Heart right ventricle (tissue), 16 donors: ENCODE measurements at regions of chr19 and their contacts with region 1.

Region 1: DNA sequence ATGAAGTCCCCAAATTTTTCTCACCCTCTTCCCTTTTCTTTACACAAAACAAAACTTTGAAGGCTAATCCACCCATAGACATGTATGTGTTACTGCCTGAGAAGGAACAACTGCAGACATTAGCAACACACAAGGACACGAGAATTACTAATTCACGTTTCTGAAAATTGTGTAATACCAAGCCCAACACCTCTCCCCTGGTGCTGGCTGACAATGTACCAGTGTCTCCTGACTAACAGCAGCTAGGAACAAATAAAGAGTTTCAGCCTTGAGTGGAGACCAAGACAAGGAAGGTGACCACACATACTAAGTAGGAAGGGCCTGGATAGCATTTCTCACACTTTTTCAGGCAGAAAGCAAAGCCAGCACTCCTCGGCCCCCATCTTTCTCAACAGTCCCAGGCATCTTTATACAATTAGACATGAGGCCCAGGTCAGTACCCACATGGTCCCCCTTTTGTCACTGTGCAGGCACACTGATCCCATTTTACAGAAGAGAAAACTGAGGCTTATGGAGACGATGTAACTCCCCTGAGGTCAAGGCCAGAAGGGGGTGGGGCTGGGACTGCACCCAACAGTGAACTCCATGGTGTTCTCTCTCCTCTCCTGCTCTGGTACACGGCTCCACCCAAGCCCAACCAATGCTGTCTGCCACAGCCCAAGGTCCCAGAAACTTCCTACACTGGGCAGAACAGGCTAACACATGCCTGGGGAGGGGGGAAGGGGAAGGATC is 8.7 kb downstream of the BRD4 start:
- DNase-seq: peak; percentile 38 to 45
- ATAC-seq: peak; percentile 47 to 83 (median 68)
- H3K4me3 ChIP-seq: no peak overlapping the region
- H3K27ac ChIP-seq: peak overlapping the region in 7 of 10 donors; percentile 30 to 63 (median 52)
- H3K4me1 ChIP-seq: peaks cover 43 to 100% (median 95%) of the 10 kb centered on the region in 9 donors
- H3K27me3 ChIP-seq: no peaks in the 10 kb centered on the region
- CTCF ChIP-seq: no peak

Region 2: GRCh38 chr19:15274477-15274876 is 49.2 kb before region 1 on chr19:
- intact Hi-C with region 1: loop called in 4 of 10 experiments (anchors 5 to 10 kb)
- DNase-seq: no peak
- ATAC-seq: peak in 7 of 8 donors; percentile 13 to 64 (median 27)
- H3K4me3 ChIP-seq: no peak overlapping the region
- H3K27ac ChIP-seq: peak overlapping the region in 4 of 10 donors; percentile 0 to 46 (median 9)
- H3K4me1 ChIP-seq: peaks cover 39 to 100% (median 98%) of the 10 kb centered on the region in 9 donors
- H3K27me3 ChIP-seq: no peaks in the 10 kb centered on the region
- CTCF ChIP-seq: no peak

Region 3: DNA sequence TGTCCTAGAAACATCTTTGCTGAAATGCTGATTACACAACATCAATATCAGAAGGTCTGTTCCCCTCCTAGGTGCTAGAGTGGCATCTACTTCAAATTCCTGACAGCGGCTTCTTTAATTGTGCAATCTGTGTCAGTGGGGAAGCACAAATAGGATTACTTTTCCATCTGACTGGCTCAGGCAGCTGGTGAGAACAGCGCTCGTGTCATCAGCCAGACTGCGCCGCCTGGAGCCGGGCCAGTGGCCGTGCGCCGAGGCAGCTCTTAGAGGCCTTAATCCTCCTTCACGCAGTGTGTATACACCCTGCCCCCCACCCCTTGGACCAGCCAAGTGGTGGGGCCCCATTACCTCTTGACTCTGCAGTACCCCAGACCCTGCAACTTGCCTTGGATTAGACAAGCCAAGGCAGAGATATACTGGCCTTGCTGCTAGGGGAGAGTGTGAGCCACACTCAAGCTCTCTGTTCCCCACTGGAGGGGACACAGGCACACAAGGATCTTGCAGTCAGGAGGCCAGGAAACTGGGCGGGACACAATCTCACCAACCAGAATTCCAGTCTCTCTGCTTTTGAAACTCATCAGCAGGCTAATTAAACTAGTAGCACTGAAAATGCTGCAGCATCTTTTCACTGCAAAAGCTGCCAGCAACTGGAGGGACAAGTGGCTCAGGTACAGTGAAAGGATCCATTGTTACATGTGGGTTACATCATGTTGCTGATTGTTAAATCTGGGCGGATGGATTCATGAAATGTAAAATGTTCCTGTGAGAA is 42.6 kb before region 1 on chr19:
- intact Hi-C with region 1: loop called in 3 of 10 experiments (anchors 5 to 10 kb)
- DNase-seq: peak; percentile 83 to 88
- ATAC-seq: peak; percentile 86 to 93 (median 90)
- H3K4me3 ChIP-seq: peak overlapping the region in 1 of 10 donors; percentile 16
- H3K27ac ChIP-seq: peak overlapping the region in 9 of 10 donors; percentile 11 to 81 (median 62)
- H3K4me1 ChIP-seq: peaks cover 66 to 100% (median 100%) of the 10 kb centered on the region in 9 donors
- H3K27me3 ChIP-seq: no peaks in the 10 kb centered on the region
- CTCF ChIP-seq: peak in 7 of 9 donors; percentile 14 to 56 (median 39)

Region 4: GRCh38 chr19:15292847-15293582 is 30.6 kb before region 1 on chr19:
- intact Hi-C with region 1: loop called in 3 of 10 experiments (anchors 5 kb)
- DNase-seq: peak in 1 of 2 donors; percentile 35
- ATAC-seq: peak; percentile 6 to 59 (median 35)
- H3K4me3 ChIP-seq: no peak overlapping the region
- H3K27ac ChIP-seq: peak overlapping the region in 4 of 10 donors; percentile 2 to 51 (median 18)
- H3K4me1 ChIP-seq: peaks cover 56 to 100% (median 100%) of the 10 kb centered on the region in 9 donors
- H3K27me3 ChIP-seq: no peaks in the 10 kb centered on the region
- CTCF ChIP-seq: no peak

Region 5: DNA sequence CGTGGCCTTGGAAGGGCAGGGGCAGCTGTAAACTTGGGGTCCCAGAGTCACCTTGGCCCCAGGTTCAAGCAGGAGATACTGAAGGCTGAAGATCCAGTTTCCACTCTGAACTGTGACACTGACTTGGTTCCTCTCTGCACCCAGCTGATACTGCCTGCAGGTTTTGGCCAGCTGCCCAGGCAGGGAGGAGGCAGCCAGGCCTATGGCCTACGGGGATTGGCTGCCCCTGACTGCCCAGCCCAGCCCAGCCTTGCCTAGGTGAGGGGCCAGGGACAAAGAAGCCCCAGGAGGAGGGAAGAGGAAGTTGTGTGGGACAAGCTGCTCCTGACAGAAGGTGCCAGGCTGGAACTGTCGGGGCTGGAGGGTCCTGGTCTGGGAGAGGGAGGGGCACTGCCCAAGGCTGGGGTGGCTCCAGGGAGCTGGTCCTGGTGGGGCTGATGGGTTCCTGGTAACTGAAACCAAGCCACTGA is 239.7 kb after region 1 on chr19:
- intact Hi-C with region 1: no loop called
- DNase-seq: peak in 1 of 2 donors; percentile 47
- ATAC-seq: peak; percentile 38 to 88 (median 73)
- H3K4me3 ChIP-seq: no peak overlapping the region
- H3K27ac ChIP-seq: no peak overlapping the region
- H3K4me1 ChIP-seq: peaks cover 0 to 7% (median 0%) of the 10 kb centered on the region in 9 donors
- H3K27me3 ChIP-seq: peaks cover 0 to 45% (median 20%) of the 10 kb centered on the region in 7 donors
- CTCF ChIP-seq: no peak